ENCODE measurements at regions of chr6 and their contacts with region 1.

Region 1: DNA sequence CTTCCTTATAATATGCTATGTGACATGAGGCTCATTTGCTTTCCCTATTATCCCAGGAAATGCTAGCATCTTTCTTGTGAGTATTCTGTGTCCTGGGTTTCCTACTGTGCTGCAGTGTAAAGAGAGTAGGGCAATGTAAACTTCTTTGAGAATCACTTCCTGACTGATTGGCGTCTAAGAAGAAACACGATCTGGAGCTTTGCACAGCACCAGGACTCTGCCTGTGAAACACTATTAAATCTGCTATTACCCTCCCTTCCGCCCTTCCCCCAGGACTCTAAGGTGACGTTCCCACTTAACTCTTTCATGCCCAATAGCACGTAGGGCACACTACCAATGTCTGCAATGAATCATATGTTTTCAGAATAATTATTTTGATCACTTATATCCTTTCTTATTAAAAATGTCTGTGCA is 607.3 kb upstream of the CITED2 start:
- DNase-seq: no peak
- H3K4me3 ChIP-seq: no peak overlapping the region
- H3K27ac ChIP-seq: peak overlapping the region; percentile 67 to 82 (median 80)
- H3K4me1 ChIP-seq: peaks cover 0 to 61% (median 44%) of the 10 kb centered on the region in 4 donors
- H3K27me3 ChIP-seq: no peaks in the 10 kb centered on the region
- CTCF ChIP-seq: no peak
- EP300 ChIP-seq: no peak
- POLR2A ChIP-seq: no peak

Region 2: GRCh38 chr6:139597771-139598755 is 383.7 kb before region 1 on chr6:
- intact Hi-C with region 1: loop called (anchors 5 kb)
- DNase-seq: peak; percentile 86
- H3K4me3 ChIP-seq: no peak overlapping the region
- H3K27ac ChIP-seq: peak overlapping the region; percentile 69 to 82 (median 77)
- H3K4me1 ChIP-seq: peaks cover 0 to 54% (median 46%) of the 10 kb centered on the region in 4 donors
- H3K27me3 ChIP-seq: no peaks in the 10 kb centered on the region
- CTCF ChIP-seq: no peak
- EP300 ChIP-seq: peak in 1 of 4 donors; percentile 11
- POLR2A ChIP-seq: no peak

Region 3: DNA sequence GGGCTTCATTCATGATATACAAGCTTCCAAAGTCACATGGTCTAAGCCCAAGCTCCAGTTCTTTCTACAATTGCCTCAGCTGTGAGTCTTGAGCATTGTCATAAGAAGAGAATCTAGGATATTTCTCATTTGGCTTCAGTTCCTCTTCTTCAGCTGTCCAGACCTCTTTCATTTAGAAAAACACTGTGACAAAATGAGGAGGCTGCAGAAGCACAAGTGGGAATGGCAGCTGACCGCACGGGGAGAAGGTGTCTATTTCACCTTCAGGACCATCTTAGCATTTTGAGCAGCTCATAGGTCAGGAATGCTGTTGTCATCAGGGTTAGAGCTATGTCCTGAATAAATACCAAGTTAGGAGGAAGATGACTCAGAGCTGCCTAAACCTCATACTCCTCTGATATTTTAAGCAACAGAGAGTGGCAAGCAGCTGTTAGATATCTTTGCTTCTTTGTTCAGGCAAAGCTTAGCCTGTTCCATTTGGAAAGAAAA is 217.2 kb before region 1 on chr6:
- intact Hi-C with region 1: loop called (anchors 10 kb)
- DNase-seq: no peak
- H3K4me3 ChIP-seq: no peak overlapping the region
- H3K27ac ChIP-seq: peak overlapping the region; percentile 71 to 89 (median 84)
- H3K4me1 ChIP-seq: peaks cover 0 to 35% (median 23%) of the 10 kb centered on the region in 4 donors
- H3K27me3 ChIP-seq: no peaks in the 10 kb centered on the region
- CTCF ChIP-seq: no peak
- EP300 ChIP-seq: peak in 2 of 4 donors; percentile 2 to 48
- POLR2A ChIP-seq: no peak

Region 4: GRCh38 chr6:139863346-139863745 is 118.4 kb before region 1 on chr6:
- intact Hi-C with region 1: loop called (anchors 10 kb)
- DNase-seq: no peak
- H3K4me3 ChIP-seq: no peak overlapping the region
- H3K27ac ChIP-seq: no peak overlapping the region
- H3K4me1 ChIP-seq: peaks cover 0 to 25% (median 17%) of the 10 kb centered on the region in 4 donors
- H3K27me3 ChIP-seq: no peaks in the 10 kb centered on the region
- CTCF ChIP-seq: no peak
- EP300 ChIP-seq: no peak
- POLR2A ChIP-seq: no peak

Region 5: DNA sequence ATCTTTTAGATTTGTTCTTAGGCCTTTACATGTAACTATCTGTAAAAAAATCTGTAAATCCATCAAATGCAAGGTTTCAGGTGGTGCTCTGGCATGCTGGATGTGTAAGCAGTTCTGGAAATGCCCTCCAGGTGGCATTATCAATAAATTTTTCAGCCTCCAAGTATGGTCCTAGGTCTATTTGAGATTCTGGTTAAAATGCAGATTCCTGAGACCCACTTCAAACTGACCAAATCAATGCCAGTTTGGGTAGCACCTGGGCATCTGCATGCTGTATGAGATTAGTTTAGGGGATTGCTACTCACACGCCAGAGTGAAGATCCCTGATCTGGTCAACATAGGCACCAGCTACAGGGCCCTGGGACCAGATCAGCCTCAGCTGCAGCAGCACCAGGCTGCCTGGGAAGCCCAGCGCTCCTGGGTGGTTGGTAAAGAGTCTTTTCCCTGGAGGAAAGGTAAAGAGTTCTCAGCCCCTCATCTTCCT is 100.0 kb before region 1 on chr6:
- intact Hi-C with region 1: loop called (anchors 5 kb)
- DNase-seq: no peak
- H3K4me3 ChIP-seq: no peak overlapping the region
- H3K27ac ChIP-seq: peak overlapping the region in 3 of 4 donors; percentile 33 to 72 (median 53)
- H3K4me1 ChIP-seq: peaks cover 0 to 21% (median 17%) of the 10 kb centered on the region in 4 donors
- H3K27me3 ChIP-seq: no peaks in the 10 kb centered on the region
- CTCF ChIP-seq: peak in 3 of 4 experiments; percentile 19 to 42 (median 31)
- EP300 ChIP-seq: no peak
- POLR2A ChIP-seq: no peak

Region 6: GRCh38 chr6:140052756-140053729 is 71.3 kb after region 1 on chr6:
- intact Hi-C with region 1: no loop called
- DNase-seq: no peak
- H3K4me3 ChIP-seq: no peak overlapping the region
- H3K27ac ChIP-seq: no peak overlapping the region
- H3K4me1 ChIP-seq: peaks cover 0 to 24% (median 6%) of the 10 kb centered on the region in 4 donors
- H3K27me3 ChIP-seq: no peaks in the 10 kb centered on the region
- CTCF ChIP-seq: no peak
- EP300 ChIP-seq: no peak
- POLR2A ChIP-seq: no peak

Region 7: DNA sequence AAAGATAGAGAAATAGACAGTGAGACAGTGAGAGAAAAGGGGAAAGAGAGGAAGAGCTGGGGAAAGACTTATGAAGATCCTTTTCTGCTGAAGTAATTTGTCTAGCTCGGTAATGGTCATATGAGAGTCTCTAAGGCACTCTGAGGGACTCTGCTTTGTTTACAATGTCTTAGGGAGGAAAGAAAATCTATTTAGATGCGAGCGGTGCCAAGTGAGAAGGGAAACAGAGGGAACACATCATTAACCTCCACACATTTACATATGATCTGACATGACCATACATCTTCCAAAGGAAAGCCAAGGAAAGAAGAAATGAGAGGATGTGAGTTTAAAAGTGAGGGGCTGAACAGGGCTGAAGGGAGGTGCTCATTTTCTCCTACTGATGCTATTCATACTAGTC is 255.0 kb after region 1 on chr6:
- intact Hi-C with region 1: no loop called
- DNase-seq: no peak
- H3K4me3 ChIP-seq: no peak overlapping the region
- H3K27ac ChIP-seq: no peak overlapping the region
- H3K4me1 ChIP-seq: no peaks in the 10 kb centered on the region
- H3K27me3 ChIP-seq: no peaks in the 10 kb centered on the region
- CTCF ChIP-seq: no peak
- EP300 ChIP-seq: no peak
- POLR2A ChIP-seq: no peak